Gastrocnemius medialis (tissue), 4 donors: ENCODE measurements at regions of chr1 and their contacts with region 1.

Region 1: DNA sequence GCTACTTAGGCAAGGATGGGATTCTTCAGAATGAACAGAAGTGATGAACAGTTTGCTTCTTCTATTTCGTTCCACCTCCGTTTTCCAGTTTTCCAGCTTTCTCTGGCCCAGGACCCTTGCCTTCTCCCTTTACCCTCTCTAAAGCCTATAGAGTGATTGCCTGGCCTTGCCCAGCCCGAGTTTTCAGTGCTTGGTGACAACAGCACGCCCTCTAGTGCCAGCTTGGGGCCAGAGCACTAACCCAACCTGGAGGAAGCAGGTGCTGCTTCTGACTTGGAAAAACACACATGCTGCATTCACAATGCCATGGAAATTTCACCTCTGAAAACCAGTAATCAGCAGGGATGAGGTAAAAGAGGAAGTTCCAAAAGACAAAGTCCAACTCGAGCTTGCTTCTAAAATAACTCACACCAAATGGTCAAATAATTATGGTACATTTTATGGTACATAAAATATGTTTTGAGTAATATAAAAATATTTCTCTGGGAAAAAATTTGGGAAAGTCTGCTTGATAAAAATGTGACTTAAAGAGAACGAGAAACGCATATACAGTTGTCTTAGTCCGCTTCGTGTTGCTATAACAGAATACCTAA is 26.1 kb downstream of the UBE2T start:
- DNase-seq: peak; percentile 45 to 59
- ATAC-seq: peak; percentile 83 to 91
- H3K4me3 ChIP-seq: no peak overlapping the region
- H3K27ac ChIP-seq: no peak overlapping the region
- H3K4me1 ChIP-seq: peaks cover 0 to 4% of the 10 kb centered on the region in 2 donors
- H3K27me3 ChIP-seq: no peaks in the 10 kb centered on the region
- CTCF ChIP-seq: peak; percentile 70 to 91 (median 82)
- POLR2A ChIP-seq: no peak

Region 2: DNA sequence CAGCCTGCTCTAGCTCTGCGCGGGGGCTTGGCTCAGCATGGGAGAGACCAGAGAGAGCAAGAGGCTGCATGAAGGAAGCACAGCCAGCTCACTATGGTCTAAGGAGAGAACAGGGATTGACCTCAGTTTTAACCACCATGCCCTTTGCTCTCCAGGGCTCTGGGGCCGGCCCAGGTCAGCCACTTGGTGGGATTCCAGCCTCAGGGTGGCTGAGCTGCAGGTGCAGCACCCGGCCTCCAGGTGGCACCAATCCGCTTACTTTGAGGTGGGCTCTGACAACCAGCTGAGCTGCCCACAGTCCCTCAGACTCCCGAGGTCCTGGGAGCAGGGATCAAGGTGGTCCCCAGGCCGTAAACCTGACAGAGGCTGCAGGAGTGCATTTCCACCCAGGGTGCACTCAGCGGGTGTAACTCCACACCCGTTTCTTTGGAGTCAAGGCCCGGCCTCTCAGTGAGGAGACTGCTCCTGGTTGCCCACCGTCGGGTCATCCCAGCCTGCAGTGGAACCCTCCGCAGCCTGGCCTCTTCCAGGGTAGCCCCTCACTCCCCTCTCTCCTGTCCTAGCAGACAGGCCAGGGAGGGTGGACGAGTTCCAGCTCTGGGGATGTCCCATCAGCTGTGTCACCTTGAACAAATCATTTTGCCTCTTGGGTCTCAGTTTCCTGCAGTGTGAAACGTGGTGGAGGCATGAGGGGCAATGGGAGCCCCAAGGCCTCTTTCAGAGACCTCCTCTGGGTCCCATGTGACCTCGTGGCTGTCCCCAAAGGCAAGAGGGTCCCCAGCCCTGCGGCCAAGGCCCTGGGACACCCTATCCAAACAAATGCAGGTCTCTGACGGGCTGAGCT is 122.7 kb before region 1 on chr1:
- in situ Hi-C with region 1: loop called in 2 of 4 experiments (anchors 10 kb)
- intact Hi-C with region 1: loop called (anchors 1 kb)
- DNase-seq: peak in 1 of 2 donors; percentile 42
- ATAC-seq: peak; percentile 69 to 73
- H3K4me3 ChIP-seq: peak overlapping the region in 1 of 4 donors; percentile 0
- H3K27ac ChIP-seq: no peak overlapping the region
- H3K4me1 ChIP-seq: no peaks in the 10 kb centered on the region
- H3K27me3 ChIP-seq: peaks cover 7 to 18% (median 11%) of the 10 kb centered on the region in 3 donors
- CTCF ChIP-seq: peak; percentile 58 to 89 (median 73)
- POLR2A ChIP-seq: no peak

Region 3: DNA sequence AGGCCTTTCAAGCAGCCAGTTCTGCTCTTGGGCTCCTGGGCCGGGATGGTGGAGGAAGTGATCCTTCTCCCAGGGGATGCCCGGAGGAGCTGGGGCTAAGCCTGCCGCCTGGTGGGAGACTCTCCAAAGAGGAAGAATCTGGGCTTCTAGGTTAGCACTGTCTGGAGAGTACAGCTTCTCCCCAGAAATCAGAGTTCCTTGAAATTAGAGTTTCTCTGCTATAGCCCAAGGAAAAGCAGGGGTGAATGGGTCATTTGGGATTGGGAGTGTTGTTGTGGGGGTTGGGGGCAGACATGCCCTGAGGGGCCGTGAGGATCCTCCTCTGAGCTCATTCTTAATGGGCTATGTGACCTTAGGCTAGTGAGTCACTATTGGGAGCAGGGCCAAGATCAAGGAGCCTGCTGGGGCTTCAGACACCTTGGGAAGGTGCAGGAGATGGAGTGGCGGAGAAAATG is 115.5 kb before region 1 on chr1:
- in situ Hi-C with region 1: loop called (anchors 5 to 10 kb)
- intact Hi-C with region 1: no loop called
- DNase-seq: peak in 1 of 2 donors; percentile 29
- ATAC-seq: peak in 1 of 2 donors; percentile 47
- H3K4me3 ChIP-seq: no peak overlapping the region
- H3K27ac ChIP-seq: peak overlapping the region in 1 of 4 donors; percentile 30
- H3K4me1 ChIP-seq: peaks cover 27 to 31% of the 10 kb centered on the region in 2 donors
- H3K27me3 ChIP-seq: no peaks in the 10 kb centered on the region
- CTCF ChIP-seq: no peak
- POLR2A ChIP-seq: no peak

Region 4: GRCh38 chr1:202274611-202275010 is 41.1 kb before region 1 on chr1:
- in situ Hi-C with region 1: no loop called
- intact Hi-C with region 1: loop called (anchors 2 kb)
- DNase-seq: no peak
- ATAC-seq: no peak
- H3K4me3 ChIP-seq: no peak overlapping the region
- H3K27ac ChIP-seq: no peak overlapping the region
- H3K4me1 ChIP-seq: no peaks in the 10 kb centered on the region
- H3K27me3 ChIP-seq: no peaks in the 10 kb centered on the region
- CTCF ChIP-seq: peak in 4 of 5 experiments; percentile 13 to 44 (median 36)
- POLR2A ChIP-seq: no peak